KBM-7 (cell line): ENCODE measurements at regions of chrX and their contacts with region 1.

Region 1: DNA sequence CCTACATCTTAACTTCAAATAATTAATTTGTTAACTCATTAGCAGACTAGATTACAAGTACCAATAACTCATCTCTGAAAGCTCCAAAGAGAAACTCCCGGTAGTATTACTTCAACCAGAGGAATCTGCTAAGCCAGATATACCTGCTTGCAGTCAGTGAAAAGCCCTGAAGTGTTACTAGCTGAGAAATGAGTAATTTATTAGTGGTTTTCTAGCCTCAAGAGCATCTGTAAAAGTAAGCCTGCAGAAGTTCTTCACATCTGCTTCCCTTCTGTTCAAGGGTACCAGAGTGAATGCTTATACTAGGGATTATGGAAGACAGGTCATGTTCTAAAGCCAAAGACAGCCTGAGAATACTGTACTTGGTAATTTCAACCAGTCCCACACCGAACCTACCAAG is 34.7 kb downstream of the IRS4 start:
- DNase-seq: no peak

Region 2: DNA sequence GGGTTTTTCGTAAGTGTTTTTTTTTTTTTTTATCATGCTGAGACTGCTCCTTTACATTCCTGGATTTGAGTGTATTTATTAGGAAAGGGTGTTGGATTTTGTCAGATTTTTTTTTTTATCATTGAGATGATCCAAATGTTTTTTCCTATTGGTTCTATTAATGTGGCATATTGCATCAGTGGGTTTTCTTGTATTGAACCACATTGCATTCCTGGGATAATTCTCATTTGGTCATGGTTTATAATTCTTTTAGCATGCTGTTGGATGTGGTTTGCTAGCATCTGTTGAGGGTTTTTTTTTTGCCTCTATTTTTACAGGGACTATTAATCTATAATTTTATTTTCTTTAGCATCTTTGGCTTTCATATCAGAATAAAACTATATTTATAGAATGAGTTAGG is 233.1 kb before region 1 on chrX:
- in situ Hi-C with region 1: no loop called
- DNase-seq: no peak

Region 3: DNA sequence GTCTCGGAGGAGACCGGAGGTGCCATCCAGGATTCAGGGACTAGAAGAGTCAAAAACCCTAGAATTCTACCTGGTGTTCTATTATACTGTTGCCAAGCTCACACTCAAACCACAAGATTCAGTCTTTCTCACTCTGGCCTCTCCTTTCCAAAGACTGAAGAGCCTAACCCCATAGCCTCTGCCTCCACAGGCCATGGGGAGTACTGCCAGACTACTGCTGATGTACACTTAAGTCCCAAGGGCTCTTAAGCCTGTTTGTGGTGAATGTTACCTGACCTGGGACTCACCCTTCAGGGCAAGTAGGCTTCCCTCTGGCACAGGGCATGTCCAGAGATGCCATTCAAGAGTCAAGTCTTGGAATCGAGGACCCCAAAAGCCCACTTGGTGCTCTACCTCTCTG is 93.6 kb after region 1 on chrX:
- in situ Hi-C with region 1: no loop called
- DNase-seq: no peak

Region 4: DNA sequence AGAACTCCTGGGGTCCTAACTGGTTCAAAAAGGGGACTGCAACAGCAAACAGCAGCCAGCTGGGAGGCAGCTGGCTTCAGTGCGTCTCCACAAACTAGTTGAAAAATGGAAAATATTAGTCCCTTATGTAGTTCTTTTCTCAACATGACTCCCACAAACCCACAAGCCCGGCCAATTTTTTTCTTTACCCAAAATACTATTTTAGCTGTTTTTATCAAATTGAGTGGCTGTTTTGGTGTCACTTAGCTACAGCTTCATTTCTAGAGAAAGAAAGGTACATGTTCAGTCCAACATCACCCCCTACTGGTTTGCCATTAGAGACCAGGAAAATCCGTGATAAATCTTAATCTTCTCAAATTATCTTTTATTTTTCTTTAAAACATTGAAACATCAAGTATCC is 683.1 kb after region 1 on chrX:
- in situ Hi-C with region 1: loop called (anchors 25 kb)
- DNase-seq: peak; percentile 24